ENCODE measurements at regions of chr15 and their contacts with region 1.

Region 1: GRCh38 chr15:68277603-68278344 is at the start of gene FEM1B:
- DNase-seq: peak; percentile 89 to 95
- ATAC-seq: peak; percentile 79 to 93 (median 82)
- H3K4me3 ChIP-seq: peak within 1 kb of the TSS; percentile 72
- H3K4me3 Mint-ChIP-seq: peak within 1 kb of the TSS; percentile 94
- H3K27ac ChIP-seq: peak within 1 kb of the TSS; percentile 89
- H3K27ac Mint-ChIP-seq: peak within 1 kb of the TSS; percentile 96 to 98
- H3K4me1 ChIP-seq: peaks cover 33% of the 10 kb centered on the region
- H3K4me1 Mint-ChIP-seq: peaks cover 51% of the 10 kb centered on the region in 2 donors
- H3K27me3 ChIP-seq: no peaks in the 10 kb centered on the region
- H3K27me3 Mint-ChIP-seq: no peaks in the 10 kb centered on the region
- CTCF ChIP-seq: no peak
- total RNA-seq, gene FEM1B: 57.4 to 73.5 (median 67.9) TPM

Region 2: DNA sequence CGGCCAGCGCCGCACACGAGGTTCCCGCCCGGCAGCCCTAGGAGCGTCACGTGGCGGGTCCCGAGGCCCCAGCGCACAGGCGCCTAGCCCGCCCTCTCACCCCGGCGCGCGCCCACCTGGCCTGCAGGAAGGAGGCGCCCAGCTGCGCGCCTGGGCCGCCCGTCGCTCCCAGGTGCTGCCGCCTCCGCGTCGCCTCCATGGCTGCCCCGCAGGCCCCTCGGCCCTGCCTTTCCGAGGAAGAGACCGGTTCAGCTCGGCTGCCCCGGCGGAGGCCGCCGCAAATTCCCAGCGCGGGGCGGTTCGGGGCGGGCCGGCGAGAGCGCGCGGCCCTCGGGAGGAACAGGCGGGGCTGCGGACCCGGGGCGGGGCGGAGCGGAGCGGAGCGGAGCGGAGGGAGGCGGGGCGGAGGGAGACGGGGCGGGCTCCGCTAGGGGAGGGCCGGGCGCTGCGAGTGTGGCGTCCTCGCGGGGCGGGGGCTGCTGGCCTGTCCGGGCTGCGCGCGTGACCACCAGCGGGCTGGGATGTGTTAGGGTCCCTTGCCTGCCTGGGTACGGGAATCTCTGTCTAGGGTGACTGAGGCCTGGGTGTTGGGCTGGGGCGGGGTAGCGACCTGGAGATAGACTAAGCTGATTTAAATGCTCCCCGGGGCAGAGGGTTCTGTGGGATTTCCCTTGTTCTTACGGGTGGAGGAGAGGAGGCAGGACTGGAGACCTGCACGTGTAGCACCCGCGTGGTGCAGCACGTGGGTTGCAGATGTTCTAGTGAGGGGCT is 48.2 kb before region 1 on chr15 and contains the start of gene CLN6:
- intact Hi-C with region 1: loop called (anchors 1 kb)
- DNase-seq: peak; percentile 77 to 89
- ATAC-seq: peak; percentile 89 to 96 (median 89)
- H3K4me3 ChIP-seq: peak within 1 kb of the TSS; percentile 72
- H3K4me3 Mint-ChIP-seq: peak within 1 kb of the TSS; percentile 92
- H3K27ac ChIP-seq: peak within 1 kb of the TSS; percentile 39
- H3K27ac Mint-ChIP-seq: peak within 1 kb of the TSS; percentile 73 to 85
- H3K4me1 ChIP-seq: peaks cover 25% of the 10 kb centered on the region
- H3K4me1 Mint-ChIP-seq: peaks cover 27 to 31% of the 10 kb centered on the region in 2 donors
- H3K27me3 ChIP-seq: no peaks in the 10 kb centered on the region
- H3K27me3 Mint-ChIP-seq: peaks cover 1 to 3% of the 10 kb centered on the region in 2 donors
- CTCF ChIP-seq: no peak
- total RNA-seq, gene CLN6: 14.9 to 19.0 (median 15.5) TPM

Measured in natural killer cell (primary cell).